OCI-LY7 (cell line): ENCODE measurements at regions of chr12 and their contacts with region 1.

Region 1: GRCh38 chr12:56041552-56042429 is at the start of gene RPS26:
- DNase-seq: peak; percentile 100
- H3K4me3 ChIP-seq: peak within 1 kb of the TSS; percentile 83
- H3K27ac ChIP-seq: peak within 1 kb of the TSS; percentile 67
- H3K4me1 ChIP-seq: peaks cover 43% of the 10 kb centered on the region
- CTCF ChIP-seq: peak; percentile 77
- total RNA-seq, gene RPS26: 306 and 600 TPM in 2 replicates

Region 2: GRCh38 chr12:55973598-55974307 is 68.0 kb before region 1 on chr12 and contains the start of gene RAB5B:
- CTCF ChIA-PET with region 1: no interaction called
- POLR2A ChIA-PET with region 1: interaction called, 7 read pairs
- intact Hi-C with region 1: loop called (anchors 2 kb)
- DNase-seq: peak; percentile 100
- H3K4me3 ChIP-seq: peak within 1 kb of the TSS; percentile 88
- H3K27ac ChIP-seq: peak within 1 kb of the TSS; percentile 57
- H3K4me1 ChIP-seq: peaks cover 25% of the 10 kb centered on the region
- CTCF ChIP-seq: no peak
- total RNA-seq, gene RAB5B: 21.6 and 21.8 TPM in 2 replicates

Region 3: DNA sequence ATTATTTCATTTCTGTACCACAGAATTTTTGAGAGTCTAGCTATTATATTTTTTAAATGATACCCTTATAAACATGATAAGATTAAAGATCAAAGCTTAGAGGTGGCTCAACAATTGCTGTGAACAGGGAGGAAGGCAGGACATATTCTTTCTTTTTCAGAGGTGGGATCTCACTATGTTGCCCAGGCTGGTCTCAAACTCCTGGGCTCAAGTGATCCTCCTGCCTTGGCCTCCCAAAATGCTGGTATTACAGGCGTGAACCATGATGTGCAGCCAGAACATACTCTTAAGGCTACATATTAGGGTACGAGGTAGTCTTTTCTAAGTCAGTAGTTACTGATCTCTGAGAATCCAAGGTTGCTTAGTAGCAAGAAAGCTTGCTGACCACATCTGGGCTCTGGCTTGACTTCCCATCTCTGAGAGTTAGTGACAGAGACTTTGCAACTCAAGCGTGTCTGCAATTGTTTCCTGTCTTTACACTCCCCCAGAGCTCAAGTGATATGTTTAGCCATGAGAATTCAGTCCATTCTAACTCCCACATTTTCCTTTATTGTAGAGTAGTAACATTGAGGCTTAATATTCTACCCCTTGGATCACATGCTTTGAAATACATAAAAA is 59.4 kb before region 1 on chr12:
- CTCF ChIA-PET with region 1: no interaction called
- POLR2A ChIA-PET with region 1: interaction called, 15 read pairs
- intact Hi-C with region 1: no loop called
- DNase-seq: peak; percentile 78
- H3K4me3 ChIP-seq: no peak overlapping the region
- H3K27ac ChIP-seq: peak overlapping the region; percentile 46
- H3K4me1 ChIP-seq: peaks cover 28% of the 10 kb centered on the region
- CTCF ChIP-seq: no peak

Region 4: GRCh38 chr12:56071648-56072047 is 29.9 kb after region 1 on chr12:
- CTCF ChIA-PET with region 1: no interaction called
- POLR2A ChIA-PET with region 1: no interaction called
- intact Hi-C with region 1: no loop called
- DNase-seq: no peak
- H3K4me3 ChIP-seq: no peak overlapping the region
- H3K27ac ChIP-seq: no peak overlapping the region
- H3K4me1 ChIP-seq: no peaks in the 10 kb centered on the region
- CTCF ChIP-seq: no peak